Uterus (tissue), 4 donors: ENCODE measurements at regions of chr1 and their contacts with region 1.

Region 1: GRCh38 chr1:181142096-181142958 is 53.8 kb downstream of the IER5 start:
- DNase-seq: peak; percentile 93 to 94
- H3K4me3 ChIP-seq: peak overlapping the region; percentile 10 to 14
- H3K27ac ChIP-seq: peak overlapping the region; percentile 93 to 94
- H3K4me1 ChIP-seq: peaks cover 4 to 18% of the 10 kb centered on the region in 2 donors
- H3K27me3 ChIP-seq: no peaks in the 10 kb centered on the region
- CTCF ChIP-seq: peak; percentile 95 to 99 (median 98)
- POLR2A ChIP-seq: peak in 1 of 2 donors; percentile 12

Region 2: GRCh38 chr1:181021811-181022434 is 120.4 kb before region 1 on chr1:
- intact Hi-C with region 1: loop called (anchors 5 kb)
- DNase-seq: peak; percentile 68 to 72
- H3K4me3 ChIP-seq: peak overlapping the region; percentile 89 to 94
- H3K27ac ChIP-seq: peak overlapping the region; percentile 90 to 94
- H3K4me1 ChIP-seq: peaks cover 0 to 4% of the 10 kb centered on the region in 2 donors
- H3K27me3 ChIP-seq: no peaks in the 10 kb centered on the region
- CTCF ChIP-seq: peak in 1 of 4 experiments; percentile 23
- POLR2A ChIP-seq: no peak

Region 3: DNA sequence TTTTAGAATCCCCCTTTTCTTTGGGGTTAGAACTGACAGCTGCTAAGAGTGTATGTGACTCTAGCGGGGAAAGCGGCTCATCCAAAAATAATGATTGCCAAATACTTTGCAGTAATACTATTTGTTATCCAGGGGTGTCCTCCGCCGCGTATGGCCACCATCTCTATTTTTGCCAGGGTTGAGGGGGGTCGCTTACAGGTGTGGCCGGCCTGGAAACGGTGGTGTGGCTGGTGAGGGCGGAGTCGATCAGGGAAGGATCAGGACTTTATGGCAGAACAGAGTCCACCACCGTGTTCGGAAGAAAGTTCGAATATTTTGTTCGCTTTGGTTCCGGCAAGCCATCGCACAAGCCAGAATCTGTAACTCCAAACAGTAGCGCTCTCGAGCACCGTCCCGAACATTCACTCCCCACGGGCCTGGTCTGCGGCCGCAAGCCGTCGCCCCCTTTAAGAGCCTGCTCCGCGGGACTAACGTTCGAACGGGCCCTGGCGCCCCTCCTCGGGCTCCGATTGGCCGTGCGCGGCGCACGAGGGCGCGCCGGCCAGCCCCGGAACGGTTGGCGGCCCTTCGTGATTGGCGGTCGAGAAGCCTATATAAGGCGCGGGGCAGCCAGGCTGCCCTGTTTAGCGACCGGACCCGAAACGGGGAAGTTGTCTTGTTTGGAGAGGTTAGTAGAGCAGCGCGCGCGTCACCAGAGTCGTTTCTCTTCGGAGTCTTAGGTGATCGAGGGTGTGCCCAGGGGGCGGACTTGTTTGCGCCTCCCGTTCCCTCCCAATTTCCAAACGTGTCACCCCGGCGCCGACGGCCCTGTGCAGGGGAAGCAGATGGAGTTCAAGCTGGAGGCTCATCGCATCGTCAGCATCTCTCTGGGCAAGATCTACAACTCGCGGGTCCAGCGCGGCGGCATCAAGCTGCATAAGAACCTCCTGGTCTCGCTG is 54.0 kb before region 1 on chr1 and contains the start of gene IER5:
- intact Hi-C with region 1: loop called (anchors 2 kb)
- DNase-seq: peak; percentile 97 to 98
- H3K4me3 ChIP-seq: peak within 1 kb of the TSS; percentile 74 to 94
- H3K27ac ChIP-seq: peak within 1 kb of the TSS; percentile 98 to 99
- H3K4me1 ChIP-seq: no peaks in the 10 kb centered on the region
- H3K27me3 ChIP-seq: no peaks in the 10 kb centered on the region
- CTCF ChIP-seq: no peak
- POLR2A ChIP-seq: peak; percentile 100
- total RNA-seq, gene IER5: 19.4 to 34.8 (median 24.2) TPM

Region 4: DNA sequence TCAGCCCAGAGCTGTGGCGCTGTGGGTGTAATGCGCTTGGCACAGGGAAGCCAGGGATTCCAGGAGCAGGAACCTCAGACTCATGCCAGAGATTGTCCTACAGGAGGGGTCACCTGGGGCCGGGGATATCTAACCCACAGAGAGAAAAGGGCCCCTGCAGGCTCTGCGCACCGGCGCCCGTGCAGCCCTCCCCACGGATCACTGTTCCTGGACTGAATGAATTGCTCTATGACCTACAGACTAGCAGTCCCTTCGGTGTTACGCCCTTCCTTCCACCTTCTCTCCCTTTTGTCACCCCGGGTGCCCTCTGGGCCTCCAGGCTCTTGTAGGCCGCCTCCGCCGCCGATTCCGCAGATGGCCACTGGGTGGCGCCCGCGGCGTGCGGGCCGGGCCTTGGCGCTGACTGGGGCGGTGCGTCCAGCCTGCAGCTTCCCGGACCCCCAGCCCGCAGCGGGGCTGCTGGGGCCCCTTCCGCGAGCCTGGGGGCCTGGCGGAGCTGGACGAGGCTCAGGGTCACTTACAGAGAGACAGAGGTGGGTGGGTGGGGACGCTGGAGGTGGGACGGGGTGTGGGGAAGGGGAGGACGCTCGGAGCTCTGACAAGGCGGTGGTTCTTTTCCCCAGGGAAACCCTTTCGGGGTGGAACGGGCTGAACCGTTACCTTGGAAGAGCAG is 47.5 kb after region 1 on chr1:
- intact Hi-C with region 1: no loop called
- DNase-seq: peak; percentile 24 to 58
- H3K4me3 ChIP-seq: peak overlapping the region in 1 of 2 donors; percentile 24
- H3K27ac ChIP-seq: no peak overlapping the region
- H3K4me1 ChIP-seq: no peaks in the 10 kb centered on the region
- H3K27me3 ChIP-seq: no peaks in the 10 kb centered on the region
- CTCF ChIP-seq: peak; percentile 84 to 95 (median 88)
- POLR2A ChIP-seq: no peak